PC-9 (cell line): ENCODE measurements at regions of chr10 and their contacts with region 1.

Region 1: GRCh38 chr10:18260310-18260922 is 120.2 kb downstream of the CACNB2 start:
- DNase-seq: no peak
- H3K4me3 ChIP-seq: no peak overlapping the region
- H3K27ac ChIP-seq: no peak overlapping the region
- H3K4me1 ChIP-seq: no peaks in the 10 kb centered on the region
- H3K27me3 ChIP-seq: 0 out of 2 replicates have a peak, but pooled peaks cover 5% of the 10 kb centered on the region
- CTCF ChIP-seq: no peak

Region 2: GRCh38 chr10:17867056-17867455 is 393.4 kb before region 1 on chr10:
- CTCF ChIA-PET with region 1: interaction called, 20 read pairs
- POLR2A ChIA-PET with region 1: no interaction called
- intact Hi-C with region 1: no loop called
- DNase-seq: no peak
- H3K4me3 ChIP-seq: no peak overlapping the region
- H3K27ac ChIP-seq: no peak overlapping the region
- H3K4me1 ChIP-seq: no peaks in the 10 kb centered on the region
- H3K27me3 ChIP-seq: no peaks in the 10 kb centered on the region
- CTCF ChIP-seq: no peak